GM10248 (cell line): ENCODE measurements at regions of chr17 and their contacts with region 1.

Region 1: GRCh38 chr17:39730095-39730921 is at the start of gene MIEN1:
- DNase-seq: peak; percentile 99
- CTCF ChIP-seq: peak; percentile 66

Region 2: GRCh38 chr17:39653662-39654331 is 76.5 kb before region 1 on chr17:
- CTCF ChIA-PET with region 1: interaction called, 22 read pairs
- POLR2A ChIA-PET with region 1: no interaction called
- DNase-seq: peak; percentile 91
- CTCF ChIP-seq: peak; percentile 77

Region 3: GRCh38 chr17:39704821-39705551 is 25.3 kb before region 1 on chr17:
- CTCF ChIA-PET with region 1: interaction called, 11 read pairs
- POLR2A ChIA-PET with region 1: no interaction called
- DNase-seq: no peak
- CTCF ChIP-seq: no peak

Region 4: GRCh38 chr17:39719563-39720355 is 10.5 kb before region 1 on chr17:
- CTCF ChIA-PET with region 1: interaction called, 18 read pairs
- POLR2A ChIA-PET with region 1: no interaction called
- DNase-seq: no peak
- CTCF ChIP-seq: no peak

Region 5: GRCh38 chr17:39754161-39754951 is 24.0 kb after region 1 on chr17:
- CTCF ChIA-PET with region 1: interaction called, 19 read pairs
- POLR2A ChIA-PET with region 1: interaction called, 5 read pairs
- DNase-seq: peak; percentile 96
- CTCF ChIP-seq: peak; percentile 87